Activated CD4-positive, alpha-beta T cell treated with anti-CD3 and anti-CD28 coated beads for 36 hours (primary cell): ENCODE measurements at regions of chr14 and their contacts with region 1.

Region 1: DNA sequence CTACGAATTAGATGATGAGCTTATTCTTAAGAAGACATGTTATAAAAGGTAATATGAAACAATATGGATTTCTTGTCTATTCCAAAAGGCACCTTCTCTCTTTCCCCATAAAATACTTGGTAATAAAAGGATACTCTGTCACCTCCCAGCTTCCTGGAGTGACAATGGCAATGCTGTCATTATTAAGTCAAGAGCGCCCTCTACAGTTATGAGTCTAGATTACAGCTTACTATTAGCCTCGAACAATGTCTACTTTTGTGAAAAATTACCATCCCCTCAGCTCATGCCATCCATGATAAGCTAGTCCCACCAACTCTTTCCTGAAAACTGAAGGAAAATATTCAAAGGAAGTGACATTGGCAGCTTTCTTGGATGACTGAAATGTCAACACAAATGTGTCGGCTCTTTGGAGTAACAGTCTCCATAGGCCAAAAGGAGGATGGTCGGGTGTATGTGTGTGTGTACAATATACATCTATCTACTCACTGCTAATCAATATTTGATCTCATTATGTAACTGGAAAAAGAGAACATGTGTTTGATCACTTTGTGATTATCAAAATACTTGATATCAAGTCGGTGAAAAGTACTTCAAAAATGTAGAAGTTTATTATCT is 48.7 kb upstream of the CDKN3 start:
- DNase-seq: no peak
- ATAC-seq: no peak
- H3K4me3 Mint-ChIP-seq: no peak overlapping the region
- H3K27ac Mint-ChIP-seq: no peak overlapping the region
- H3K4me1 Mint-ChIP-seq: peaks cover 6% of the 10 kb centered on the region
- H3K27me3 Mint-ChIP-seq: peaks cover 13% of the 10 kb centered on the region

Region 2: DNA sequence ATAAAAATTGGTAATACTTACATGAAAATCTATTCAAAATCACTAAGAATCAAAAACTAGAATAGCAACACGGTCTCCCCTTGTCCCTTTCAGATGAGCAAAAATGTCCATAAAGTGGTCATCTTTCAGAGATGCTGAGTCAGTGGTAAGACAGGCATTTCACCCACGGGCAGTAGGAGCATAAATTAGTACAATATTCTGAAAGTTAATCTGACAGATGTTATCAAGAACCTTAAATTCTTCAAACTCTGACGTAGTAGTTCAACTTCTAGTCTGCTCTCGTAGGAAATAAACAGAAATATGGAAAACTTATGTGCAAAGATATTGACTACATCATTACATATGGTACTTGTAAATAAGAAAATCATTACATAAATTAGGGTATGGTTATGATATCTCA is 1523.6 kb before region 1 on chr14:
- CTCF ChIA-PET with region 1: no interaction called
- POLR2A ChIA-PET with region 1: no interaction called
- intact Hi-C with region 1: loop called in 1 of 2 experiments (anchors 5 kb)
- DNase-seq: no peak
- ATAC-seq: no peak
- H3K4me3 Mint-ChIP-seq: no peak overlapping the region
- H3K27ac Mint-ChIP-seq: no peak overlapping the region
- H3K4me1 Mint-ChIP-seq: peaks cover 3% of the 10 kb centered on the region
- H3K27me3 Mint-ChIP-seq: peaks cover 3% of the 10 kb centered on the region

Region 3: GRCh38 chr14:53432378-53432802 is 915.7 kb before region 1 on chr14:
- CTCF ChIA-PET with region 1: interaction called, 4 read pairs
- POLR2A ChIA-PET with region 1: no interaction called
- intact Hi-C with region 1: loop called in 1 of 2 experiments (anchors 5 kb)
- DNase-seq: peak; percentile 12
- ATAC-seq: peak; percentile 44
- H3K4me3 Mint-ChIP-seq: no peak overlapping the region
- H3K27ac Mint-ChIP-seq: no peak overlapping the region
- H3K4me1 Mint-ChIP-seq: no peaks in the 10 kb centered on the region
- H3K27me3 Mint-ChIP-seq: peaks cover 3% of the 10 kb centered on the region

Region 4: GRCh38 chr14:53929871-53930715 is 418.0 kb before region 1 on chr14:
- CTCF ChIA-PET with region 1: interaction called, 3 read pairs
- POLR2A ChIA-PET with region 1: no interaction called
- intact Hi-C with region 1: loop called (anchors 5 to 10 kb)
- DNase-seq: peak; percentile 61
- ATAC-seq: no peak
- H3K4me3 Mint-ChIP-seq: no peak overlapping the region
- H3K27ac Mint-ChIP-seq: no peak overlapping the region
- H3K4me1 Mint-ChIP-seq: no peaks in the 10 kb centered on the region
- H3K27me3 Mint-ChIP-seq: peaks cover 9% of the 10 kb centered on the region

Region 5: GRCh38 chr14:54329082-54329695 is 18.9 kb before region 1 on chr14:
- CTCF ChIA-PET with region 1: interaction called, 16 read pairs
- POLR2A ChIA-PET with region 1: no interaction called
- intact Hi-C with region 1: no loop called
- DNase-seq: peak; percentile 43
- ATAC-seq: no peak
- H3K4me3 Mint-ChIP-seq: no peak overlapping the region
- H3K27ac Mint-ChIP-seq: no peak overlapping the region
- H3K4me1 Mint-ChIP-seq: no peaks in the 10 kb centered on the region
- H3K27me3 Mint-ChIP-seq: peaks cover 29% of the 10 kb centered on the region

Region 6: GRCh38 chr14:54387328-54387727 is 39.2 kb after region 1 on chr14:
- CTCF ChIA-PET with region 1: no interaction called
- POLR2A ChIA-PET with region 1: no interaction called
- intact Hi-C with region 1: no loop called
- DNase-seq: no peak
- ATAC-seq: no peak
- H3K4me3 Mint-ChIP-seq: no peak overlapping the region
- H3K27ac Mint-ChIP-seq: no peak overlapping the region
- H3K4me1 Mint-ChIP-seq: no peaks in the 10 kb centered on the region
- H3K27me3 Mint-ChIP-seq: peaks cover 8% of the 10 kb centered on the region

Region 7: GRCh38 chr14:55411426-55412389 is 1063.6 kb after region 1 on chr14 and contains the start of gene ATG14:
- CTCF ChIA-PET with region 1: no interaction called
- POLR2A ChIA-PET with region 1: no interaction called
- intact Hi-C with region 1: no loop called
- DNase-seq: peak; percentile 88
- ATAC-seq: peak; percentile 99
- H3K4me3 Mint-ChIP-seq: peak within 1 kb of the TSS; percentile 79
- H3K27ac Mint-ChIP-seq: peak within 1 kb of the TSS; percentile 82
- H3K4me1 Mint-ChIP-seq: peaks cover 27% of the 10 kb centered on the region
- H3K27me3 Mint-ChIP-seq: no peaks in the 10 kb centered on the region
- total RNA-seq, gene ATG14: 5.0 to 5.1 TPM